Activated CD4-positive, alpha-beta T cell treated with anti-CD3 and anti-CD28 coated beads for 36 hours (primary cell): ENCODE measurements at regions of chr4 and their contacts with region 1.

Region 1: DNA sequence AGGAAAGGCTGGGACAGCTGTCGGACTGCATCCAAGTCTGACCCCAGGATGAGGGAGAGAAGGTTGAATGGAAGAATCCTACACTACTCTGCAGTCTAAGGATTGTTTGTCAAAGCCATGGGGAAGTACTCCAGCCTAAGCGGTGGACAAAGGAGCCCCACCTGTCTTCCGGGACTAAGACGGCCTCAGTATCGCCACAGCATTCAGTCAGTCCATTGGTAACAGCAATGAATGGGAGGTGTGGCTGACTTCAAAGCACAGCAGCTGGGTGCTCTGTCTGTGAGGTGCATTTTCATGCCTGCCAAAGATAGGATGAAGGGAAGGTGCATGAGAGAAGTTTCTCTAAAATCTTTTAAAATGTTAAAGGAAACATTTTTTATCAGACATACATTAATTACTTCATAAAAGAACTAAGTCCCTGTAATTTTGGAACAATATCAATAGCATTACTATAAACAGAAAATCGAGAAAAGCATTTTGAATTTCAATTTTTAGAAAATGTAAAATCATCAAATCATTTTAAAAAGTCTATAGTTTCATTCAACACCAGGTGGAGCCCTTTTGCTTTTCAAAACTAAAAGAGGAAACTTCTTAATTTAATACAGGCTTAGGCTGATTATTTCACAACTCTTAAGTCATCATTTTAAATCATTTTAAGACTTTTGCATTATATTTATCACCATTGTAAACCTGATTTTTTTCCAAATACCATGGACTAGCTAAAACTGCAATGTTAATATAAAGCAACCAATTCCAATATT is 27.6 kb upstream of the INTU start:
- DNase-seq: no peak
- ATAC-seq: no peak
- H3K4me3 Mint-ChIP-seq: no peak overlapping the region
- H3K27ac Mint-ChIP-seq: no peak overlapping the region
- H3K4me1 Mint-ChIP-seq: no peaks in the 10 kb centered on the region
- H3K27me3 Mint-ChIP-seq: peaks cover 7% of the 10 kb centered on the region

Region 2: GRCh38 chr4:127134490-127134889 is 470.6 kb before region 1 on chr4:
- CTCF ChIA-PET with region 1: no interaction called
- POLR2A ChIA-PET with region 1: no interaction called
- intact Hi-C with region 1: no loop called
- DNase-seq: no peak
- ATAC-seq: no peak
- H3K4me3 Mint-ChIP-seq: no peak overlapping the region
- H3K27ac Mint-ChIP-seq: no peak overlapping the region
- H3K4me1 Mint-ChIP-seq: no peaks in the 10 kb centered on the region
- H3K27me3 Mint-ChIP-seq: no peaks in the 10 kb centered on the region

Region 3: DNA sequence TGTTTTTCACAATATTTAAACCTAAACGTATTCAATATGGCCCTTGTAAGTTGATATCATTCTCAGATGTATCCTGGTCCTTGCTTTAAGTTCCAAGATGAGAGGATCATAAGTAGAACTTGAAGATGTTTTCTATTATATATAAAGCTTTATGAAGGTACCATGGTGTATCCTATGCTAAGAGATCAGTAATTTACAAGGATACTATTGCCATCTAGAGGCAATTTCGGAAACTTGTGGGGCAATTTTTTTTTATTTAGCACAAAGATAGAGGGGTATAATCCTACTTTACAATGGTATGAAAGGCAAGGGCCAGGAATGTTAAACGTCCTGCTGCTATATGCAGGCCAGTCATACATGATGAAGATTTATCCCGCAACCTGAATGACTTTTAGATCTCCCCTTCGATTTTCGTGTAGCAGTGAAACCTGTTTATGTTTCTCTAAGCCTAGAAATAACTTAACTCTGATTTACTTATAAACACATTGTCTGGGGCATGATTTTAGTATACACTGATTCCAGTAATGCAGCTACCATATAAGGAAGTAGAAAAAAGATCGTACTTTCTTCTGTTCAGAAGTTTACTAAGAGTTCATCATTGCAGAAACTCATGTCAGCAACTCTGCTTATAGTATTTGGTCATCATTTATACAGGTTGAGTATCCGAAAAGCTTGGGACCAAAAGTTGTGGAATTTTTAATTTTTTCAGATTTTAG is 127.6 kb after region 1 on chr4:
- CTCF ChIA-PET with region 1: interaction called, 12 read pairs
- POLR2A ChIA-PET with region 1: no interaction called
- intact Hi-C with region 1: loop called (anchors 1 kb)
- DNase-seq: no peak
- ATAC-seq: no peak
- H3K4me3 Mint-ChIP-seq: no peak overlapping the region
- H3K27ac Mint-ChIP-seq: no peak overlapping the region
- H3K4me1 Mint-ChIP-seq: no peaks in the 10 kb centered on the region
- H3K27me3 Mint-ChIP-seq: peaks cover 2% of the 10 kb centered on the region

Region 4: GRCh38 chr4:127788517-127788916 is 183.4 kb after region 1 on chr4:
- CTCF ChIA-PET with region 1: no interaction called
- POLR2A ChIA-PET with region 1: no interaction called
- intact Hi-C with region 1: loop called in 1 of 2 experiments (anchors 1 kb)
- DNase-seq: no peak
- ATAC-seq: peak; percentile 51
- H3K4me3 Mint-ChIP-seq: no peak overlapping the region
- H3K27ac Mint-ChIP-seq: no peak overlapping the region
- H3K4me1 Mint-ChIP-seq: no peaks in the 10 kb centered on the region
- H3K27me3 Mint-ChIP-seq: peaks cover 40% of the 10 kb centered on the region

Region 5: DNA sequence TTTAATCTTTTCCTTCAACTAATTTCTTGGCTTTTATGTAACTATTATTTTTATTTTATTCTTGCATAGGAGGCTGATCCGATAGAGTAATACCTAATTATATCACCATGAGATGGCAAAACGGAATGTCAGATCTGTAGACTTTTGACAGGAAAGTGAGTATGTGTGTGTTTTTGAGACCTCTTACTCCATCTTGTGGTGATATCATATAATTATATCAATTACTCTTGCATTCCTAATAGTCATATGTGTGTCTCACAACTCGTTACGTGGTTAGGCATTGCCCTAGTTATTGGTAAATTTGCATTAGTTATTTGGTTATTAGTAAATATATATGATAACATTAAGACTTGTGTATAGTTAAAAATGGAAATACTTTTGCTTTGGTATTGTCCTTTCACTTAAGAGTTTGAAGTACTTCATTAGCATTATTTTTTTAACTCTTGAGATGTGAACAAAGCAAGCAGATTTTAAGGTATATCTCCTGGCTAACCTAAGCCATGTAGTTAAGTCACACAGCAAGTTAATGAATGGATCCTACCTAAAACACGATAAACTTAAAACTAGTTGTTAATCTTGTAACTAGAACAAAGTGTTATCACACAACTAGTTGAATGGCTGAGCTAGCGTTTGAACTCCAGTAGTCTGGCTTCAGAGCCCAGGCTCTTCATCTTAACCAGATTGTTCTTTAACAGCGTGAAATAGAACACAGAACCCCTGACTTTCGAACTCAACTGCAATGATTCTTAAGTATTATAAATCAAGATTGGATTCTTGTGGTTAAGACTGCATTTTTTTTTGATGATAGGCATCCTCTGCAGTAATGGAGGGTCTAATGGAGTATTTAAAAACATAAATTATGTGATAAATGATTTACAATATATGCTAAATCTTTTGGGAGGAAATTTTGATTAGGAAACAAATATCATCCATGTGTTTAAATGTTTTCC is 615.4 kb after region 1 on chr4:
- CTCF ChIA-PET with region 1: no interaction called
- POLR2A ChIA-PET with region 1: no interaction called
- intact Hi-C with region 1: loop called in 1 of 2 experiments (anchors 5 kb)
- DNase-seq: no peak
- ATAC-seq: peak; percentile 30
- H3K4me3 Mint-ChIP-seq: no peak overlapping the region
- H3K27ac Mint-ChIP-seq: no peak overlapping the region
- H3K4me1 Mint-ChIP-seq: no peaks in the 10 kb centered on the region
- H3K27me3 Mint-ChIP-seq: no peaks in the 10 kb centered on the region